ENCODE measurements at regions of chr13 and their contacts with region 1.

Region 1: DNA sequence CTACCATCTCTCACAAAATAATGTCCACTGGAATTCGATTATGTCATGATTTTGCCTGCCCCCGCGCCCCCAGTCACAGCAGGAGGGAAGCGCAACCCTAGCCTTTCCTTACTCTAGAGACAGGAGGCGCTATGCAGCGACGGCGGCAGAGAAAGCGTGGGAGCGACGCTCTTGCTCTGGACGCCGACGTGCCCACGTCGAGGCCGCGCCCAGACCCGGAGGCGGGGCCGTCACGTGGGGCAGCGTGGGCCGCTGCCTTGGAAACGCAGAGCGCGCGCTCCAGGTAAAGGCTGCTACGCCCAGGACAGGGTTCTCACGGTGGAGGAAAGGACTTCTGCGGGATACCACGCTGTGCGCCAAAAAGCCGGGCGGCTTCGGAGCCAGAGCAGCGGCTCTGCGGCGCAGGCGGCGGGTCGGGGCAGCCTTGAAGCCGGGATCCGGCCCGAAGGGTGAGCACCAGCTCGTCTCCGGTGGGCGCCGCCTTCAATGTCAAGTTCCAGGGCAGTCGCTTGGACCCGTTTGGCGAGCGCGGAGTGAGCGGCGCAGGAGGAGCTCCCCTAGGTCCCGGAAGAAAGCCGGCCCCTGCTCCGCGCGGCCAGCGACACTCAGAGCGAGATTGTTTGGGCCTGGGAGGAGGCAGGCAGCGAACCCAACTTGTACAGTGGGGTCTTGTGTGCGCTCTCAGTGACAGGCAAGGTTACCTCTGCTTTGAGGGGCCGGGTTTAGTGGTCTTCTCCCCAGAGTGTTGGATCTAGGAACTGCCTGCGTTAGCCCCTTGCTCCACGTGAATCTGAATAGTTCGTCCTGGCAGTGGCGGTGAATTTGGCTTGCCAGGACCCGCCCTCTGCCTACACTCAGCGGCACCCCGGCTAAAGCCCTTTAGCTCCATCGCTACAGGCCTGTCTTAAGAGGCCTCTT is 121.7 kb downstream of the MRPL57 start:
- DNase-seq: peak; percentile 70 to 95 (median 81)
- ATAC-seq: peak; percentile 94
- H3K4me3 ChIP-seq: peak overlapping the region; percentile 81
- H3K4me3 Mint-ChIP-seq: peak overlapping the region; percentile 90
- H3K27ac ChIP-seq: peak overlapping the region in 1 of 2 donors; percentile 53
- H3K27ac Mint-ChIP-seq: peak overlapping the region; percentile 34
- H3K4me1 ChIP-seq: peaks cover 19% of the 10 kb centered on the region
- H3K4me1 Mint-ChIP-seq: peaks cover 26% of the 10 kb centered on the region
- H3K27me3 ChIP-seq: no peaks in the 10 kb centered on the region
- H3K27me3 Mint-ChIP-seq: no peaks in the 10 kb centered on the region
- CTCF ChIP-seq: peak; percentile 95

Region 2: GRCh38 chr13:20703780-20704445 is 594.3 kb before region 1 on chr13:
- CTCF ChIA-PET with region 1: no interaction called
- POLR2A ChIA-PET with region 1: no interaction called
- intact Hi-C with region 1: loop called in 1 of 2 experiments (anchors 10 kb)
- DNase-seq: peak; percentile 50 to 91 (median 70)
- ATAC-seq: peak; percentile 91
- H3K4me3 ChIP-seq: no peak overlapping the region
- H3K4me3 Mint-ChIP-seq: no peak overlapping the region
- H3K27ac ChIP-seq: no peak overlapping the region
- H3K27ac Mint-ChIP-seq: no peak overlapping the region
- H3K4me1 ChIP-seq: peaks cover 14% of the 10 kb centered on the region
- H3K4me1 Mint-ChIP-seq: peaks cover 7% of the 10 kb centered on the region
- H3K27me3 ChIP-seq: peaks cover 18 to 33% of the 10 kb centered on the region in 2 experiments
- H3K27me3 Mint-ChIP-seq: peaks cover 35% of the 10 kb centered on the region
- CTCF ChIP-seq: peak; percentile 21

Region 3: GRCh38 chr13:21115231-21115630 is 182.9 kb before region 1 on chr13:
- CTCF ChIA-PET with region 1: no interaction called
- POLR2A ChIA-PET with region 1: no interaction called
- intact Hi-C with region 1: loop called (anchors 2 to 10 kb)
- DNase-seq: no peak
- ATAC-seq: no peak
- H3K4me3 ChIP-seq: no peak overlapping the region
- H3K4me3 Mint-ChIP-seq: no peak overlapping the region
- H3K27ac ChIP-seq: no peak overlapping the region
- H3K27ac Mint-ChIP-seq: no peak overlapping the region
- H3K4me1 ChIP-seq: peaks cover 4% of the 10 kb centered on the region
- H3K4me1 Mint-ChIP-seq: no peaks in the 10 kb centered on the region
- H3K27me3 ChIP-seq: no peaks in the 10 kb centered on the region
- H3K27me3 Mint-ChIP-seq: no peaks in the 10 kb centered on the region
- CTCF ChIP-seq: no peak

Region 4: DNA sequence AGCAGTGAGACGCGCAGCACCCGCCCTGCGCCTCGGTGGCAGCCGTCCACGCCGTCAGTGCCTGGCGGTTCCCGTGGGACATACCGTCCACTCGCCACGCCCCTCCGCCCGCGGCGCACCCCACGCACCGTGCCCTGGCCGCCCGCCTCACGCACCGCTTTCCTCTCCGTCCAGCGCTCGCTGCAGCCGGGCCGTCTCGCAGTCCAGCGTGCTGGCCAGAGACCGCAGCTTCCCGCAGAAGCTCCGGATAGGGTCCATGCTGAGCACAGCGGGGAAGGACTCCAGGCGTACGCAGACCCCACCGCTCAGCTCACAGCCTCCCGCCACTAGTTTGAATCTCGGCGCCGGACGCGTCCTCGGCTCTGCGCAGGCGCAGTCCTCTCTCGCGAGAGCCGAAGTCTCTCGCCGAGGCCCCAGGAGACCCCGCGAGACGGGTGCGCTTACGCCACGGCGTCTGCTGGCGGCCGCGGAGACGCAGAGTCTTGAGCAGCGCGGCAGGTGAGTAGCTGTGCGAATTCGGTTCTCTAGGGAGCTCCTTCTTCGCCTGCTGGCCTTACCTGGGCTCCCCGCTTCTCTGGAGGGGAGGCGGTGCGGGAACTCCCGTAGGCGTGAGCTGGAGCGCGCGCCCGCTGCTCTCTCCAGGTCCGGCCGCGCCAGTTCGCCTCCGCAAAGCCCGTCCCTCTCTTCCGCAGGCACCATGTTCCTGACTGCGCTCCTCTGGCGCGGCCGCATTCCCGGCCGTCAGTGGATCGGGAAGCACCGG is 121.8 kb before region 1 on chr13 and contains the starts of genes MRPL57 and SKA3:
- CTCF ChIA-PET with region 1: interaction called, 9 read pairs
- POLR2A ChIA-PET with region 1: interaction called, 11 read pairs
- intact Hi-C with region 1: loop called (anchors 2 to 5 kb)
- DNase-seq: peak; percentile 87 to 98 (median 92)
- ATAC-seq: peak; percentile 98
- H3K4me3 ChIP-seq: peak within 1 kb of the TSS; percentile 100
- H3K4me3 Mint-ChIP-seq: peak within 1 kb of the TSS; percentile 90
- H3K27ac ChIP-seq: peak within 1 kb of the TSS; percentile 83 to 95
- H3K27ac Mint-ChIP-seq: peak within 1 kb of the TSS; percentile 96
- H3K4me1 ChIP-seq: peaks cover 22% of the 10 kb centered on the region
- H3K4me1 Mint-ChIP-seq: peaks cover 29% of the 10 kb centered on the region
- H3K27me3 ChIP-seq: no peaks in the 10 kb centered on the region
- H3K27me3 Mint-ChIP-seq: no peaks in the 10 kb centered on the region
- CTCF ChIP-seq: no peak
- total RNA-seq, gene MRPL57: 10.0 to 10.5 TPM
- total RNA-seq, gene SKA3: 0.30 TPM in 1 of 2 experiments, not detected in the other

Region 5: DNA sequence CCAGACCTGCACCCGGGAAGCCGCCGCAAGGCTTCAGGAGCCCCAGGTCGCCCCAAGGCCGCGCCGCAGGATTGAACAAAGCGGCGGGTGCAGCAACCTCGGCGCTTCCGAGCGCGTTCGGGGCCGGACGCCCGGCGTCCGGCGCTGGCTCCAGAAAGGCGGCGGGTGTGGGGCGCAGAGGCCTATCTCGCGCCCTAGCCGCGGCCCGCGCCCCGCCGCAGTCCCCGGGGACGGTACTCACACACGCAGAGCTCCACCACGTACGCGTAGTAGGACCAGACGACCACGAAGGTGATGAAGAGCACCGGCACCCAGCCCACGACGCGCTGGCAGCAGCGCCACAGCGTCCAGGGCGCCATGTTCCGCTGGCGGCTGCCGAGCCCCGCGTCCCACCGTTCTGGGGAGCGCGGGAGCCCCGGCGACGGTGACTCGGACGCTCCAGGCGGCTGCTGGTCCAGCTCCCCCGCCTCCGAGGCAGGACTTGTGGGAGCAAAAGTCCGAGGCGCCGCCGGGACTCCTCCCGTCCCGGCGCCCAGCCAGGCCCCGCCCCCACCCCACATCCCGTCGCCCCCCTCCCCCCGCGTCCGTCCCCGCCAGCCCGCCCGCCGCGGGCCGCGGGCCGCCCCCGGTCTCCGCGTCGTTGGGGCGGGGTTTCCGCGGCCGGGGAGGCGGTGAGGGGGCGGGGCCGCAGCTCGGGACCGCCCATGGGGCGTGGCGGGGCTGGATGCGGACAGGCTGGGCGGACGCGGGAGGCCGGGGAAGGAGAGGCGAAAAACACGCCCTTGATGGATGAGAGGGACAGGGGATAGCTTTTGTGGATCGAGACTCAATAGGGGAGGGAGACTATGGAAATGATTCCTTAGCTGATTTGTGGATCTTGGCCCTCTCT is 160.9 kb after region 1 on chr13 and contains the start of gene ZDHHC20:
- CTCF ChIA-PET with region 1: interaction called, 7 read pairs
- POLR2A ChIA-PET with region 1: interaction called, 31 read pairs
- intact Hi-C with region 1: loop called (anchors 2 to 5 kb)
- DNase-seq: peak; percentile 75 to 95 (median 88)
- ATAC-seq: peak; percentile 85
- H3K4me3 ChIP-seq: peak within 1 kb of the TSS; percentile 90
- H3K4me3 Mint-ChIP-seq: peak within 1 kb of the TSS; percentile 97
- H3K27ac ChIP-seq: peak within 1 kb of the TSS; percentile 56 to 84
- H3K27ac Mint-ChIP-seq: peak within 1 kb of the TSS; percentile 92
- H3K4me1 ChIP-seq: peaks cover 12% of the 10 kb centered on the region
- H3K4me1 Mint-ChIP-seq: peaks cover 42% of the 10 kb centered on the region
- H3K27me3 ChIP-seq: no peaks in the 10 kb centered on the region
- H3K27me3 Mint-ChIP-seq: no peaks in the 10 kb centered on the region
- CTCF ChIP-seq: no peak
- total RNA-seq, gene ZDHHC20: 62.8 to 65.1 TPM

Measured in CD4-positive, alpha-beta T cell (primary cell).